Colonic mucosa (tissue), 4 donors: ENCODE measurements at regions of chr6 and their contacts with region 1.

Region 1: GRCh38 chr6:158220786-158221442 is 52.8 kb downstream of the GTF2H5 start:
- DNase-seq: peak; percentile 84
- H3K4me3 ChIP-seq: no peak overlapping the region
- H3K27ac ChIP-seq: no peak overlapping the region
- H3K4me1 ChIP-seq: no peaks in the 10 kb centered on the region
- H3K27me3 ChIP-seq: no peaks in the 10 kb centered on the region
- CTCF ChIP-seq: peak; percentile 92

Region 2: GRCh38 chr6:158518191-158519127 is 297.5 kb after region 1 on chr6:
- intact Hi-C with region 1: loop called (anchors 10 kb)
- DNase-seq: peak; percentile 37
- H3K4me3 ChIP-seq: peak overlapping the region; percentile 24
- H3K27ac ChIP-seq: no peak overlapping the region
- H3K4me1 ChIP-seq: peaks cover 8% of the 10 kb centered on the region
- H3K27me3 ChIP-seq: peaks cover 3% of the 10 kb centered on the region
- CTCF ChIP-seq: peak; percentile 48

Region 3: DNA sequence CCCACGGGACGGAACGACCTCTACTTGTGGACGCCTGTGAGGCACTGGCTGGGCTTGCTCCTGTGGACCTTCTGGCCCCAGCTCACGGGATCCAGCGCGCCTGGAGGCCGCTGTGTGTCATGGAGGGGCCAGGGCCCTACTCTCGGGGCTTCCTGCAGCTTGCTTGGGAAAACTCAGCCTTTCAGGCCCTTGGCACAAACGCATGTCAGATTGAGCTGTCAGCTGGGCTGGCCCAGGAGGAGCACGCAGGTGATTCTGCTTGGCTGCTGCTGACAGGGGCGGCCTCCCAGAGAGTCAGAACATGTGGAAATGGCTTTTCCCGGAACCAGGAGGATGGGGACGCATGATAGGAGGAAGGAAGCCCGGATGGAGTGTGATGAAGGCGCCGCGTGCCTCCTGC is 378.7 kb after region 1 on chr6:
- intact Hi-C with region 1: loop called (anchors 5 kb)
- DNase-seq: no peak
- H3K4me3 ChIP-seq: no peak overlapping the region
- H3K27ac ChIP-seq: no peak overlapping the region
- H3K4me1 ChIP-seq: no peaks in the 10 kb centered on the region
- H3K27me3 ChIP-seq: no peaks in the 10 kb centered on the region
- CTCF ChIP-seq: no peak

Region 4: DNA sequence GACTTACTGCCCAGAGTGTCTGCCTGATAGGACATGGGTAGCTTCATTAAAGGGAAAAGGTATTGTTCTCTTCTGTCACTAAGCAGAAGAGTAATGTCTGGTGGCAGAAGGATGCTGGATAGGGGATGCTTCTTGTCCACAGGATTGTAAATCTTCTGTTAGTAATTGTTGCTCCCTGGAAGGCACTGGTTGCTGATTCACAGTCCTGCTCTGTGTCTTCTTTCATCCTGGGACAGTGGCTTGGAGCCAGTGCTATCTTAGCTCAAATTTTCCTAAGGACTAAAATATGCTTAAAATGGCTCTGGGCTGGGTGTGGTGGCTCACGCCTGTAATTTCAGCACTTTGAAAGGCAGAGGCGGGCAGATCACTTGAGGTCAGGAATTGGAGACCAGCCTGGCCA is 476.9 kb after region 1 on chr6:
- intact Hi-C with region 1: loop called (anchors 5 kb)
- DNase-seq: no peak
- H3K4me3 ChIP-seq: no peak overlapping the region
- H3K27ac ChIP-seq: no peak overlapping the region
- H3K4me1 ChIP-seq: no peaks in the 10 kb centered on the region
- H3K27me3 ChIP-seq: no peaks in the 10 kb centered on the region
- CTCF ChIP-seq: no peak